Activated B cell treated with CpG ODN at 0.5 μM for 24 hours (primary cell): ENCODE measurements at regions of chr5 and their contacts with region 1.

Region 1: DNA sequence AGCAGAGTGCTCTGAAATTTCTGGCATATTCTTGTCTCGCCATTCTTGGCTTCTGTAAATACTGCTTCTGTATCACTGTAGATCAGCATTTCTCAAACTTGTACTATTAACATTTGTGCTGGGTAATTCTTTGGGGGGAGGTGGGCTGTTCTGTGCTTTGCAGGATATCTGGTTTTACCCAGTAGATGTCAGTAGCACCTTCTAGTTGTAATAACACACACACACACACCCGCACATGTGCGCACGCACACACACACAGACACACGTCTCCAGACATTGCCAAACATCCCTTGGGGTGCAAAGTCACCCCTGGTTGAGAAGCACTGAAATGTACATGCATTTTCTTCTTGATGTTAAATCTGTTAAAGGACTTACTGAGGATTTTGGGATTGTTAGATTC is 304.1 kb downstream of the MAT2B start:
- DNase-seq: no peak
- ATAC-seq: no peak
- H3K4me3 Mint-ChIP-seq: no peak overlapping the region
- H3K27ac Mint-ChIP-seq: no peak overlapping the region
- H3K4me1 Mint-ChIP-seq: peaks cover 17% of the 10 kb centered on the region
- H3K27me3 Mint-ChIP-seq: peaks cover 3% of the 10 kb centered on the region
- CTCF ChIP-seq: no peak

Region 2: DNA sequence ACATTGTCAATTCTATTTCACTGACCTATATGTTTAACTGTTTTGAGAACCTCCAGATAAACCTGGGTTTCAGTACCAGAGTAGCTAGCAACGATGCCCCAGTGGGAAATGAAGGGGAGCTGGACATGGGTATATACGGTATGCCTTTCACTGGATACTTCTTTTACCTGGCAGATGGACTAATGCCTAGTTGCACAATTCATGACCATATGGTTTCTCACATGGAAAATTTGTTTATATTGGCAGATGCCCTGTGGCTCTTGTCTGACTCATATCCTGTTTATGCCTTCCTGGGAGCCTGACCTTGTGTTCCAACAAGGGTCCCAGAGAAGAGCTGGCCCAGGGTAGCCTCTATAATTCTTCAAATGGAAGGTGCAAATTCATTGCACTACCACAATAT is 160.0 kb before region 1 on chr5:
- CTCF ChIA-PET with region 1: no interaction called
- POLR2A ChIA-PET with region 1: no interaction called
- intact Hi-C with region 1: no loop called
- DNase-seq: no peak
- ATAC-seq: no peak
- H3K4me3 Mint-ChIP-seq: no peak overlapping the region
- H3K27ac Mint-ChIP-seq: no peak overlapping the region
- H3K4me1 Mint-ChIP-seq: no peaks in the 10 kb centered on the region
- H3K27me3 Mint-ChIP-seq: peaks cover 3% of the 10 kb centered on the region
- CTCF ChIP-seq: no peak

Region 3: GRCh38 chr5:164153469-164154172 is 344.1 kb after region 1 on chr5:
- CTCF ChIA-PET with region 1: no interaction called
- POLR2A ChIA-PET with region 1: no interaction called
- intact Hi-C with region 1: loop called (anchors 5 kb)
- DNase-seq: no peak
- ATAC-seq: no peak
- H3K4me3 Mint-ChIP-seq: no peak overlapping the region
- H3K27ac Mint-ChIP-seq: no peak overlapping the region
- H3K4me1 Mint-ChIP-seq: no peaks in the 10 kb centered on the region
- H3K27me3 Mint-ChIP-seq: no peaks in the 10 kb centered on the region
- CTCF ChIP-seq: no peak